WTC11 (cell line): ENCODE measurements at regions of chr12 and their contacts with region 1.

Region 1: DNA sequence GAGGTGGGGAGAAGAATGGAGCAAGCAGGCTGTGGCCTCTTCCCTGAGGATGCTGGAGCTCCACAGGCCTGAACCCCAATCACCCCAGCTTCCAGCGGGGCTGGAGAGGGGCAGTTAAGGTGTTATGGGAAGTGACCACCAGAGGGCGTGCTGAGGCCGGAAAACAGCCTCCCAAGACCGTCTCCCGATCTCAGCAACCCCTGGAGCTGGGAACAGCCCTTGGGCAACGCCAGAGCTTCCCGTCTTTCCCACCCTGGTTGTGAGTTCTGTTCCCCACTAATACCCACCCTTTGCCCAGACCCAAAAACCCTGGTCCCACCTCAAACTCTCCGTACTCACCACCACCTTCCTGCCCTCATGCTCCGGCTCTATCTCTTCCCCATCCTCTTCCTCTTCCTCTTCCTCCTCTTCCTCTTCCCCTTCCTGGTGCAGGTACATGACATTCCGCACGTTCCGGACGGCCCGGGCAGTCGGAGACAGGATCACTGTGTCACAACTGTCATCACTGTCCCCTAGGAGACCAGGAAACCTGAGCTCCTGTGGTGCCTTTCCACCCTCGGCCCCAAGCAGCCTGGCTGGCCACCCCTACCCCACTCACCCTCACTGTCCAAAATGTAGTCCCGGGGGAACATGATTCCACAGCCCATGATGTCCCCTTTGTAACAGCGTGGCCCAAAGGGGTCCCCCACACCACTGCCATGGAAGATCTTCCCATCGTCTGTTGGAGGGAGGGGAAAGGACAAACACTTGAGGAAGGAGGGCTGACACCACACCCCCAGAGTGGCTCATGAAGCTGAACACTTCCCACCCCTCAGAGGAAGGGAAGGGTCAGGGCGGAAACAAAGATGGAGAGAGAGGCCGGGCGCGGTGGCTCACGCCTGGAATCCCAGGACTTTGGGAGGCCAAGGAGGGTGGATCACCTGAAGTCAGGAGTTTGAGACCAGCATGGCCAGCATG is 12.9 kb downstream of the SPRYD3 start:
- DNase-seq: peak; percentile 87
- ATAC-seq: peak; percentile 73
- H3K4me3 Mint-ChIP-seq: no peak overlapping the region
- H3K27ac Mint-ChIP-seq: no peak overlapping the region
- H3K4me1 Mint-ChIP-seq: peaks cover 23% of the 10 kb centered on the region
- H3K27me3 Mint-ChIP-seq: peaks cover 21% of the 10 kb centered on the region
- CTCF ChIP-seq: peak; percentile 96

Region 2: GRCh38 chr12:52873832-52874572 is 192.3 kb before region 1 on chr12:
- CTCF ChIA-PET with region 1: no interaction called
- POLR2A ChIA-PET with region 1: no interaction called
- DNase-seq: peak; percentile 48
- ATAC-seq: peak; percentile 43
- H3K4me3 Mint-ChIP-seq: peak overlapping the region; percentile 68
- H3K27ac Mint-ChIP-seq: no peak overlapping the region
- H3K4me1 Mint-ChIP-seq: peaks cover 24% of the 10 kb centered on the region
- H3K27me3 Mint-ChIP-seq: peaks cover 31% of the 10 kb centered on the region
- CTCF ChIP-seq: no peak

Region 3: DNA sequence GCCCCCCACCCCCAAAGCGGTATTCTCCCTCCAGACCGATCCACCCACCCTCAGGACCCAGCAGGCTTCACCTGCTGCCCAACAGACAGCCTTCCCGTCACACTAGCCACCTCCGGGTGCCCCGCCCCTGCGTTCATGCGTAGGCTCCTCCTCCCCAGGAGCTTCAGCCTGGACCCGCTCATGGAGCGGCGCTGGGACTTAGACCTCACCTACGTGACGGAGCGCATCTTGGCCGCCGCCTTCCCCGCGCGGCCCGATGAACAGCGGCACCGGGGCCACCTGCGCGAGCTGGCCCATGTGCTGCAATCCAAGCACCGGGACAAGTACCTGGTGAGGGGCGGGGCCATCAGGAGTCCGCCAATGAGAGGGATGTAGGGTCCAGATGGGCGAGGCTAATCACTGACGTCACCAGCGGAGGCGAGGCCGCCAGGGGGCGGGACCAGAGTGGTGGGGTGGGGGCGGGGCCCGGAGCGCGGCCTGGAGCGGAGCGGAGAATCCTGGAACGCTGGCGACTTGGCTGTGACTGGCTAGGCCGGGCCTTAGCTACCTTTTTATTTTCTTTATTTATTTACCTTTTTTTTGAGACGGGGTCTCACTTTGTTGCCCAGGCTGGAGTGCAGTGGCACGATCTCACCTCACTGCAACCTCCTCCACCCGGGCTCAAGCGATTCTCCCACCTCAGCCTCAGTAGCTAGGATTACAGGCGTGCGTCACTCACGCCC is 12.0 kb before region 1 on chr12:
- CTCF ChIA-PET with region 1: interaction called, 151 read pairs
- POLR2A ChIA-PET with region 1: interaction called, 4 read pairs
- DNase-seq: peak; percentile 97
- ATAC-seq: peak; percentile 75
- H3K4me3 Mint-ChIP-seq: peak overlapping the region; percentile 94
- H3K27ac Mint-ChIP-seq: peak overlapping the region; percentile 98
- H3K4me1 Mint-ChIP-seq: peaks cover 31% of the 10 kb centered on the region
- H3K27me3 Mint-ChIP-seq: peaks cover 40% of the 10 kb centered on the region
- CTCF ChIP-seq: no peak

Region 4: DNA sequence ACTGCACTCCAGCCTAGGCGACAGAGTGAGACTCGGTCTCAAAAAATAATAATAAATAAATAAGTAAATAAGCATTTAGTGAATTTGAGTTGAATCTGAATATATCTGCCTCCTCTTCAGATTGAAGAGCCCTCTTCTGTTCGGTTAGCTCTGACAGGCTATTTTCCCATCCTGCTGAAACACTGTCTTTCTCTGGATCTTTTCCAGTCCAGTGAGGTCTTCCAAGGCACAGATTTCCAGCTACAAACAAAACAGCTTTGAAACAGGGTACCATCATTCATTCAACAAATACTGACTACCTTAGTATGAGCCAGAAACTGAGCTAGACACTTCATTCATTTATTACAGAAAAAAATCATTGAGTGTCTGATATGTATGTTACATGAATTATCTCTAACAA is 20.1 kb after region 1 on chr12:
- CTCF ChIA-PET with region 1: interaction called, 474 read pairs
- POLR2A ChIA-PET with region 1: no interaction called
- DNase-seq: no peak
- ATAC-seq: no peak
- H3K4me3 Mint-ChIP-seq: no peak overlapping the region
- H3K27ac Mint-ChIP-seq: no peak overlapping the region
- H3K4me1 Mint-ChIP-seq: no peaks in the 10 kb centered on the region; the same call in 1 of the 2 replicates
- H3K27me3 Mint-ChIP-seq: peaks cover 82% of the 10 kb centered on the region
- CTCF ChIP-seq: no peak

Region 5: DNA sequence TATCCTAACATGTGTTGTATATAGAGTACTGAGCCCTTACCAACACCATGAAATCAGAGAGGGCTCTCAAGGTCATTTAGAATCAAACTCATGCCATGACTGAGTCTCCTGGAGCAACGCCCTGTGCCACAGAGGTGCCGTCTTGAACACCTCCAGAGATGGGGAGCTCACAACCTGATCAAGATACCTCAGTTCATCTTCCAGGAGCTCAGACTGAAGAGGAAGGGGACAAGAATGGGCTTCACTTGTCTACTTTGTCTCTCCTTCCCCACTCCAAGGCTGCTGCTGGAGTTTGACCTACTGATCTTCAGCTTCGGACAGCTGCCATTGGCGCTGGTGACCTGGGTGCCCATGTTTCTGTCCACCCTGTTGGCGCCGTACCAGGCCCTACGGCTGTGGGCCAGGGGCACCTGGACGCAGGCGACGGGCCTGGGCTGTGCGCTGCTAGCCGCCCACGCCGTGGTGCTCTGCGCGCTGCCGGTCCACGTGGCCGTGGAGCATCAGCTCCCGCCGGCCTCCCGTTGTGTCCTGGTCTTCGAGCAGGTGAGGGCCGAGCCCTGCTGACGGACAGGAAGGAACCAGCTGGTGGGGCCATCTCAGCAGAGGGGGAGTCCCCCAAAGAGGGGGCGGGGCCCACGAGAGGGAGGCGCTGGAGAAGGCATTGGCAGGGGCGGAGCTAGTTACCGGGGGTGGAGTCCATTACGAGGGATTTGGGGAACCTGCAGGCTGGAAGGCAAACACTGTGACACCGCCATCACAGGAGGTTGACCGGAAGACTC is 49.0 kb after region 1 on chr12:
- CTCF ChIA-PET with region 1: interaction called, 11 read pairs
- POLR2A ChIA-PET with region 1: no interaction called
- DNase-seq: peak; percentile 92
- ATAC-seq: peak; percentile 98
- H3K4me3 Mint-ChIP-seq: no peak overlapping the region
- H3K27ac Mint-ChIP-seq: no peak overlapping the region
- H3K4me1 Mint-ChIP-seq: 0 out of 2 replicates have a peak, but pooled peaks cover 2% of the 10 kb centered on the region
- H3K27me3 Mint-ChIP-seq: peaks cover 32% of the 10 kb centered on the region
- CTCF ChIP-seq: no peak

Region 6: DNA sequence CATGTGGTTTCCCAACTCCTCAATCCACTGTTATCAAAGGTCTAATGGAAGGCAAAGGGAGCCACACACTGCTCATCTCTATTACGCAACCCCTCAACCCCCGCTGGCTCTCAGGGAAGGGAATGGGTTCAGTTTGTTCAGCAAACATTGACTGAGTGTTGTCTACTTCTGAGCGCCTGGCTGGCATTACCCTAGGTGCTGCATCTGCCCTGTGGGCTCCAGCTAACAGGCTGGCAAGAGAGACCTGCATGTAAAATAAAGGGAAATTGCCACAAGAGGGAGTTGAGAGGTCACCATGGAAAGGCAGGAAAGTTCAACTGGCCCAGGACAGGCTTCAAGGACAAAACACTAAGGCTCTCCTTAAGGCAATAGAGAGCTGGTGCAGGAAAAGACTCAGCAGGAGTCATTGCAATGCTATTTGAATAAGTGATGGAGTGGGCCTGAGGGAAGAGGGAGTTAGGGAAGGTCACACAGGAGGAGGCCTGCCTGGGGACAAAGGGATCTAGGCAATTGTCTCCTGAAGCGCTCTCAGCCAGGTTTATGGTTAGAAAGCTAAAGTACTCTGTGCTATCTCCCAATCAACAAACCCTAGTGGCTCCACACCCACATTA is 108.7 kb after region 1 on chr12:
- CTCF ChIA-PET with region 1: interaction called, 23 read pairs
- POLR2A ChIA-PET with region 1: no interaction called
- DNase-seq: peak; percentile 63
- ATAC-seq: peak; percentile 97
- H3K4me3 Mint-ChIP-seq: no peak overlapping the region
- H3K27ac Mint-ChIP-seq: no peak overlapping the region
- H3K4me1 Mint-ChIP-seq: peaks cover 23% of the 10 kb centered on the region
- H3K27me3 Mint-ChIP-seq: peaks cover 100% of the 10 kb centered on the region
- CTCF ChIP-seq: no peak

Region 7: DNA sequence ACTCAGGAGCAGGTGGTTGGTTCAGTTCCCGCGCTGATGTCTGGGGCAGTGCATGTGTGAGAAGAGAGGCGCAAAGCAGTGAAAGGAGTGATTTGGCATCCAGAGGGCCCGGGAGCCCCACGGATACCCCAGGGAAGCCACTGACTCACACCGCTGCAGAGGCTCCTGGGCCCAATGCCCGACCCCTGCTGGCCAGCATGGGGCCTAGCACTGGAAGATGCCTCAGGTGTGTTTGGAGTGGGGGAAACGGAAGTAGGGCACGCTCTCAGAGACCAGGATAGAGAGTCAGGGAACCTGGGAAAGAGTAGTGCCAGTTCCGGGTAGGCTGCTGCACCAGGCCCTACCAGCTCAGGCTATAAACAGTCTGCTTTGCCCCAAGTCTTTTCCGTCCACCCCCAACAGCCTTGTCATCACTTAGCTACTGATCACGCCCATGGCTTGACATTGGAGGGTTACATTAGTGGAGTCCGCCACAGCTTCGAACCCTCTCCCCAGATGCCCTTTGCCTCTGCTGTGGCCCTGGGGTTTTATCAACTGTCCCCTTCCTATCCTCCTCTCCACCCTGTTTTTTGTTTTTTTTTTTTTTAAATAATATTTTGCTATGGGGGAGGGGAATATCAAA is 124.0 kb after region 1 on chr12:
- CTCF ChIA-PET with region 1: interaction called, 105 read pairs
- POLR2A ChIA-PET with region 1: no interaction called
- DNase-seq: peak; percentile 78
- ATAC-seq: peak; percentile 97
- H3K4me3 Mint-ChIP-seq: no peak overlapping the region
- H3K27ac Mint-ChIP-seq: no peak overlapping the region
- H3K4me1 Mint-ChIP-seq: peaks cover 16% of the 10 kb centered on the region
- H3K27me3 Mint-ChIP-seq: peaks cover 35% of the 10 kb centered on the region
- CTCF ChIP-seq: peak; percentile 53; the same call in 1 of the 2 replicates

Region 8: GRCh38 chr12:53267999-53268647 is 201.9 kb after region 1 on chr12 and contains the start of gene ESPL1:
- CTCF ChIA-PET with region 1: interaction called, 18 read pairs
- POLR2A ChIA-PET with region 1: no interaction called
- DNase-seq: peak; percentile 89
- ATAC-seq: peak; percentile 88
- H3K4me3 Mint-ChIP-seq: peak within 1 kb of the TSS; percentile 100
- H3K27ac Mint-ChIP-seq: peak within 1 kb of the TSS; percentile 86
- H3K4me1 Mint-ChIP-seq: peaks cover 29% of the 10 kb centered on the region
- H3K27me3 Mint-ChIP-seq: no peaks in the 10 kb centered on the region; the same call in 1 of the 2 replicates
- CTCF ChIP-seq: peak; percentile 26; the same call in 1 of the 2 replicates
- total RNA-seq, gene ESPL1: 41.5 to 61.4 TPM (median 48.5 TPM) in 3 replicates